Activated B cell treated with CpG ODN at 0.5 μM for 24 hours (primary cell): ENCODE measurements at regions of chr14 and their contacts with region 1.

Region 1: DNA sequence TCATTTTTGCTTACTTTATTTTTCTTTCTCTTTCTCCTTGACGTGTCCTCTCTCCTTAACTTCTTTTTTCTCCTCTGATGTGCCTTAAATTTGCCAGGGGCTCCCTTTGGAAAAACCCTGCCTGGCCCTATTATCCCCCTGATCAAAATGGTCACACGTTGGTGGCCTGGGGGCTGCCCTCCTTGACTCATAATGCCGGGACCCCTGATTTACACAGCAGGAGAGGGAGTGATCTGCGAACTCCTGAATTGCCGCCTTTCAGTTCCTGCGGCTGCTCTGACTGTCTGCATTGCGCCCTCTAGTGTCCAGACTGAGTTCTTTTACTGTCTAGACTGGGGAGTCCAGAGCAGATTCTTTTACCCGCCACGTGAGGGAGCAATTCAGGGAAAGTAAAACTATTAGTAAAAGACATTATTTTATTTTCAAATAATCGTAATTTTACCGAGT is 44.8 kb upstream of the GZMB start:
- DNase-seq: peak; percentile 43
- ATAC-seq: peak; percentile 91
- H3K4me3 Mint-ChIP-seq: peak overlapping the region; percentile 75
- H3K27ac Mint-ChIP-seq: peak overlapping the region; percentile 78
- H3K4me1 Mint-ChIP-seq: peaks cover 51% of the 10 kb centered on the region
- H3K27me3 Mint-ChIP-seq: no peaks in the 10 kb centered on the region
- CTCF ChIP-seq: peak; percentile 99

Region 2: DNA sequence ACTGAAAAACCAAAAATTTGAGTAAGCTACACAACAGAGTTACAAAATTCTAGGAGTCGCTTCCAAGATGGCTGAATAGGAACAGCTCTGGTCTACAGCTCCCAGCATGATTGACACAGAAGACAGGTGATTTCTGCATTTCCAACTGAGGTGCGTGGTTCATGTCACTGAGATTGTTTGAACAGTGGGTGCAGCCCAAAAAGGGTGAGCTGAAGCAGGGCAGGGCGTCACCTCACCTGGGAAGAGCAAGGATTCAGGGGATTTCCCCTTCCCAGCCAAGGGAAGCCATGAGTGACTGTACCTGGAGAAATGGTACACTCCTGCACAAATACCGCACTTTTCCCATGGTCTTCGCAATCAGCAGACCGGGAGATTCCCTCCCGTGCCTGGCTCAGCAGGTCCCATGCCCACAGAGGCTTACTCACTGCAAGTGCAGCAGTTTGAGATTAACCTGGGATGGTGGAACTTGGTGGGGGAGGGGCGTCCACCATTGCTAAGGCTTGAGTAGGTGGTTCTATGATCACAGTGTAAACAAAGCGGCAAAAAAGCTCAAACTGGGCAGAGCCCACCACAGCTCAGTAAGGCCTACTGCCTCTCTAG is 736.3 kb before region 1 on chr14:
- CTCF ChIA-PET with region 1: no interaction called
- POLR2A ChIA-PET with region 1: no interaction called
- intact Hi-C with region 1: no loop called
- DNase-seq: no peak
- ATAC-seq: no peak
- H3K4me3 Mint-ChIP-seq: no peak overlapping the region
- H3K27ac Mint-ChIP-seq: no peak overlapping the region
- H3K4me1 Mint-ChIP-seq: peaks cover 12% of the 10 kb centered on the region
- H3K27me3 Mint-ChIP-seq: no peaks in the 10 kb centered on the region
- CTCF ChIP-seq: no peak

Region 3: GRCh38 chr14:24332268-24332993 is 346.4 kb before region 1 on chr14:
- CTCF ChIA-PET with region 1: interaction called, 3 read pairs
- POLR2A ChIA-PET with region 1: no interaction called
- intact Hi-C with region 1: loop called (anchors 10 kb)
- DNase-seq: peak; percentile 63
- ATAC-seq: peak; percentile 95
- H3K4me3 Mint-ChIP-seq: peak overlapping the region; percentile 83
- H3K27ac Mint-ChIP-seq: peak overlapping the region; percentile 42
- H3K4me1 Mint-ChIP-seq: peaks cover 39% of the 10 kb centered on the region
- H3K27me3 Mint-ChIP-seq: peaks cover 14% of the 10 kb centered on the region
- CTCF ChIP-seq: no peak

Region 4: DNA sequence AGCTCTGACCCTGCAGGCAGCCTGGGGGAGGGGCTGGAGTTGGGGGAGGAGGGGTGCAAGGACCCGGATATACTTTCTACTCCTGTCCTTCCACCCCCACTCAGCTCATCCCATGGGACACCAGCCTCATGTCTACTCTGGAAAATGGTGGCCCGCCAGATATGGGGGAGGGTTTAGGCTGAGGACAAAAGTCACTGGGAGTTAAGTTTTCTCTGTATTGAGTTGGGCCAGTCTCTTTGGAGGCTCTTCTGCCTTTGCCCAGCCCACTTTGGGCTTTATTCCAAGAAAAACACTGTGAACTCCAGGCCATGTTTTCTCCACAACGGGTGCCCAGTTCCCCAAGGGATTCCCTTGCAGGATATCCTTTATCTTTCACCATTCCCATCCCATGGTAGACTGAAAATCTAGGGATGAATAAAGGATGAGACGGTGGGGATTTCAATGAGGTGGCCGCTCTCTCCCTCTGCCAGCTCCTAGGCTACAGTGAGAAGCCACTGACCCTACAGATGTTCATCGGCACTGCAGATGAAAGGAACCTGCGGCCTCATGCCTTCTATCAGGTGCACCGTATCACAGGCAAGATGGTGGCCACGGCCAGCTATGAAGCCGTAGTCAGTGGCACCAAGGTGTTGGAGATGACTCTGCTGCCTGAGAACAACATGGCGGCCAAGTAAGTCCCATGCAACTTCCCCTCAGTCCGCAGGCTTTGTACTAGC is 306.0 kb before region 1 on chr14:
- CTCF ChIA-PET with region 1: no interaction called
- POLR2A ChIA-PET with region 1: no interaction called
- intact Hi-C with region 1: no loop called
- DNase-seq: no peak
- ATAC-seq: no peak
- H3K4me3 Mint-ChIP-seq: no peak overlapping the region
- H3K27ac Mint-ChIP-seq: no peak overlapping the region
- H3K4me1 Mint-ChIP-seq: peaks cover 10% of the 10 kb centered on the region
- H3K27me3 Mint-ChIP-seq: peaks cover 2% of the 10 kb centered on the region
- CTCF ChIP-seq: no peak

Region 5: DNA sequence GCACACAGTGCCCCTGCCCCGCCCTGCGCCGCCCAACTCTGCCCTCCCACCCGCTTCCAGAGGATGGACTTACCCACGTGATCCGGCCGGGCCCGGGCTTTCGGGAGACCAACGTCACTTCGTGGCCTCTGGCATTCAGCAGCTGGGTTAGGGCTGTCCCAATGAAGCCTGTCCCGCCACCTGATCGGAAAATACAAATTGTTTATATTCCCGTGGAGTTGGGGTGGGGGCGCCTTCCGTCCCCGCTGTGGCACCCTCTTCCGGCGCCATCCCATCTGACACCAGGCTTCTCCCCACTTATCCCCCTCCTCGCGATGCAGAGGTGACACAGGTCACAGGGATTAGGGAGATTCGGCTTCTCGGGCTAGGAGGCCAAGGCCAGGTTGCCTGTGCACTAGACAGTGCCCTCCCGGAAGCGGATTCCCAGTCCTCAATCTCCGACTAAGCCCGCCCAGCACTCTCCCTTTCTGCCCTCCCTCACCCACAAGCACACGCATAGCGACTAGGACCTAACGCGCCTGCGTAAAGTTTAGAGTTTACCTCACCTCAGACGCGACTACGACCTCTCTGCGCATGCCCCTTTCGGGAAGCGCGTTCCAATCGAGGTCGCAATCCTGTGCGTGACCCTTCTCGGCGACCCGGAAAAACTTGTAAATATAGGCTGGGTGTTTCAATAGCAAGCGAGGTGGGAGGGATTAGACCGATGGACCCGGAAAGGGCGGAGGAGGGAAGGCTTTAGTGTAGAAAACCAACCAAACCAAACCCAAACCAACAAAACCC is 236.4 kb before region 1 on chr14 and contains the start of gene SDR39U1:
- CTCF ChIA-PET with region 1: no interaction called
- POLR2A ChIA-PET with region 1: no interaction called
- intact Hi-C with region 1: loop called (anchors 2 kb)
- DNase-seq: peak; percentile 81
- ATAC-seq: peak; percentile 89
- H3K4me3 Mint-ChIP-seq: peak within 1 kb of the TSS; percentile 98
- H3K27ac Mint-ChIP-seq: peak within 1 kb of the TSS; percentile 98
- H3K4me1 Mint-ChIP-seq: peaks cover 48% of the 10 kb centered on the region
- H3K27me3 Mint-ChIP-seq: no peaks in the 10 kb centered on the region
- CTCF ChIP-seq: no peak
- total RNA-seq, gene SDR39U1: 70.6 and 80.0 TPM in 2 replicates

Region 6: GRCh38 chr14:24605435-24606190 is 73.2 kb before region 1 on chr14:
- CTCF ChIA-PET with region 1: interaction called, 34 read pairs
- POLR2A ChIA-PET with region 1: no interaction called
- intact Hi-C with region 1: loop called (anchors 1 kb)
- DNase-seq: peak; percentile 48
- ATAC-seq: peak; percentile 95
- H3K4me3 Mint-ChIP-seq: no peak overlapping the region
- H3K27ac Mint-ChIP-seq: no peak overlapping the region
- H3K4me1 Mint-ChIP-seq: peaks cover 34% of the 10 kb centered on the region
- H3K27me3 Mint-ChIP-seq: peaks cover 2% of the 10 kb centered on the region
- CTCF ChIP-seq: peak; percentile 94

Region 7: GRCh38 chr14:24695265-24696241 is 16.7 kb after region 1 on chr14:
- CTCF ChIA-PET with region 1: interaction called, 6 read pairs
- POLR2A ChIA-PET with region 1: no interaction called
- intact Hi-C with region 1: loop called (anchors 1 kb)
- DNase-seq: no peak
- ATAC-seq: peak; percentile 59
- H3K4me3 Mint-ChIP-seq: no peak overlapping the region
- H3K27ac Mint-ChIP-seq: no peak overlapping the region
- H3K4me1 Mint-ChIP-seq: peaks cover 32% of the 10 kb centered on the region
- H3K27me3 Mint-ChIP-seq: no peaks in the 10 kb centered on the region
- CTCF ChIP-seq: no peak